Activated CD4-positive, alpha-beta T cell treated with anti-CD3 and anti-CD28 coated beads for 36 hours (primary cell): ENCODE measurements at regions of chr3 and their contacts with region 1.

Region 1: GRCh38 chr3:50298836-50299637 is at the starts of genes HYAL3 and NAA80:
- DNase-seq: peak; percentile 100
- ATAC-seq: peak; percentile 89
- H3K4me3 Mint-ChIP-seq: peak within 1 kb of the TSS; percentile 97
- H3K27ac Mint-ChIP-seq: peak within 1 kb of the TSS; percentile 96
- H3K4me1 Mint-ChIP-seq: peaks cover 13% of the 10 kb centered on the region
- H3K27me3 Mint-ChIP-seq: no peaks in the 10 kb centered on the region
- total RNA-seq, gene HYAL3: 4.5 to 5.4 TPM
- total RNA-seq, gene NAA80: 17.6 to 18.7 TPM

Region 2: GRCh38 chr3:49786241-49786958 is 512.6 kb before region 1 on chr3 and contains the start of gene IP6K1:
- CTCF ChIA-PET with region 1: no interaction called
- POLR2A ChIA-PET with region 1: no interaction called
- intact Hi-C with region 1: loop called in 1 of 2 experiments (anchors 1 kb)
- DNase-seq: peak; percentile 100
- ATAC-seq: peak; percentile 100
- H3K4me3 Mint-ChIP-seq: peak within 1 kb of the TSS; percentile 90
- H3K27ac Mint-ChIP-seq: peak within 1 kb of the TSS; percentile 96
- H3K4me1 Mint-ChIP-seq: peaks cover 37% of the 10 kb centered on the region
- H3K27me3 Mint-ChIP-seq: no peaks in the 10 kb centered on the region
- total RNA-seq, gene IP6K1: 29.1 to 31.0 TPM

Region 3: GRCh38 chr3:49813497-49814174 is 485.4 kb before region 1 on chr3 and contains the start of gene UBA7:
- CTCF ChIA-PET with region 1: no interaction called
- POLR2A ChIA-PET with region 1: no interaction called
- intact Hi-C with region 1: no loop called
- DNase-seq: peak; percentile 62
- ATAC-seq: peak; percentile 92
- H3K4me3 Mint-ChIP-seq: peak within 1 kb of the TSS; percentile 89
- H3K27ac Mint-ChIP-seq: peak within 1 kb of the TSS; percentile 95
- H3K4me1 Mint-ChIP-seq: peaks cover 14% of the 10 kb centered on the region
- H3K27me3 Mint-ChIP-seq: no peaks in the 10 kb centered on the region
- total RNA-seq, gene UBA7: 85.5 to 85.7 TPM

Region 4: DNA sequence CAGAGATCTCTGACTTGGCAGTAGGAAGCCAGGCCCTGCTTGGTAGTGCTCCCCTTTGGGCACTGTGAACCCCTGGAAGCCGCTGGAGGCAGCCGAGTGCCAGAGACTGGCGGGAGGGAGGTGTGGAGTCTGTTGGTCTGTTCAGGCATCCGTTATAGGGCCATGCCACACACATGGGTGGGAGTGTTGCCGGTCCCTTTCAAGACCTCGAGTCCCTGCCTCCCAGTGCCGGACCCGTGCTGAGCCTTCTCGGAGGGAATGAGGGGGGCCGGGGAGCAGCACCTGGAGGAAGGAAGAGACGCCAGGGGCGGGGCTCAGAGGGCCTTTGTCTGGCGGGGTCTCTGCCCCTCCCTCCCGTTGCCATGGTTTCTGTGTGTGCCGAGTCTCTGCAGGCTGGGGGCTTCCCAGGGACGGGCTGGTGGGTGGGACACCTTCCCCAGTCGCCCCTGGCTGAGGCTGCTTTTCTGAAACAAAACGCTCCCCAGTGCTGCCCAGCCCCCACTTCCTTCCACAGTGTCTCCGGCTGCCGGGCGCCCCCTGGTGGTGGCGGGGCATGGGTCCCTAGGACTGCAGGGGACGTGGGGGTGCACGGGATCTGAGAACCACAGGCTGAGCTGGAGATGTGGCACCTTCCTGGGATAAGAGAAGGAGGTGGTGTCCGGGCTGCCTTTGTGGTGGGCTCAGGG is 53.1 kb before region 1 on chr3:
- CTCF ChIA-PET with region 1: interaction called, 15 read pairs
- POLR2A ChIA-PET with region 1: no interaction called
- intact Hi-C with region 1: loop called in 1 of 2 experiments (anchors 2 kb)
- DNase-seq: peak; percentile 98
- ATAC-seq: peak; percentile 76
- H3K4me3 Mint-ChIP-seq: peak overlapping the region; percentile 75
- H3K27ac Mint-ChIP-seq: peak overlapping the region; percentile 95
- H3K4me1 Mint-ChIP-seq: peaks cover 84% of the 10 kb centered on the region
- H3K27me3 Mint-ChIP-seq: no peaks in the 10 kb centered on the region

Region 5: GRCh38 chr3:50337191-50337841 is 38.3 kb after region 1 on chr3:
- CTCF ChIA-PET with region 1: interaction called, 16 read pairs
- POLR2A ChIA-PET with region 1: interaction called, 10 read pairs
- intact Hi-C with region 1: loop called (anchors 1 kb)
- DNase-seq: peak; percentile 99
- ATAC-seq: peak; percentile 82
- H3K4me3 Mint-ChIP-seq: peak overlapping the region; percentile 83
- H3K27ac Mint-ChIP-seq: peak overlapping the region; percentile 91
- H3K4me1 Mint-ChIP-seq: peaks cover 50% of the 10 kb centered on the region
- H3K27me3 Mint-ChIP-seq: no peaks in the 10 kb centered on the region

Region 6: GRCh38 chr3:50365080-50365841 is 66.2 kb after region 1 on chr3:
- CTCF ChIA-PET with region 1: interaction called, 3 read pairs
- POLR2A ChIA-PET with region 1: no interaction called
- intact Hi-C with region 1: loop called in 1 of 2 experiments (anchors 1 kb)
- DNase-seq: peak; percentile 98
- ATAC-seq: peak; percentile 99
- H3K4me3 Mint-ChIP-seq: peak overlapping the region; percentile 72
- H3K27ac Mint-ChIP-seq: peak overlapping the region; percentile 74
- H3K4me1 Mint-ChIP-seq: peaks cover 13% of the 10 kb centered on the region
- H3K27me3 Mint-ChIP-seq: no peaks in the 10 kb centered on the region